B cell (primary cell): ENCODE measurements at regions of chr2 and their contacts with region 1.

Region 1: GRCh38 chr2:190781604-190782198 is 98.9 kb upstream of the GLS start:
- DNase-seq: peak; percentile 63
- ATAC-seq: peak; percentile 53
- H3K4me3 ChIP-seq: no peak overlapping the region
- H3K4me3 Mint-ChIP-seq: no peak overlapping the region
- H3K27ac ChIP-seq: no peak overlapping the region
- H3K27ac Mint-ChIP-seq: no peak overlapping the region
- H3K4me1 ChIP-seq: no peaks in the 10 kb centered on the region
- H3K4me1 Mint-ChIP-seq: no peaks in the 10 kb centered on the region
- H3K27me3 ChIP-seq: no peaks in the 10 kb centered on the region
- H3K27me3 Mint-ChIP-seq: peaks cover 12% of the 10 kb centered on the region
- CTCF ChIP-seq: peak; percentile 82

Region 2: DNA sequence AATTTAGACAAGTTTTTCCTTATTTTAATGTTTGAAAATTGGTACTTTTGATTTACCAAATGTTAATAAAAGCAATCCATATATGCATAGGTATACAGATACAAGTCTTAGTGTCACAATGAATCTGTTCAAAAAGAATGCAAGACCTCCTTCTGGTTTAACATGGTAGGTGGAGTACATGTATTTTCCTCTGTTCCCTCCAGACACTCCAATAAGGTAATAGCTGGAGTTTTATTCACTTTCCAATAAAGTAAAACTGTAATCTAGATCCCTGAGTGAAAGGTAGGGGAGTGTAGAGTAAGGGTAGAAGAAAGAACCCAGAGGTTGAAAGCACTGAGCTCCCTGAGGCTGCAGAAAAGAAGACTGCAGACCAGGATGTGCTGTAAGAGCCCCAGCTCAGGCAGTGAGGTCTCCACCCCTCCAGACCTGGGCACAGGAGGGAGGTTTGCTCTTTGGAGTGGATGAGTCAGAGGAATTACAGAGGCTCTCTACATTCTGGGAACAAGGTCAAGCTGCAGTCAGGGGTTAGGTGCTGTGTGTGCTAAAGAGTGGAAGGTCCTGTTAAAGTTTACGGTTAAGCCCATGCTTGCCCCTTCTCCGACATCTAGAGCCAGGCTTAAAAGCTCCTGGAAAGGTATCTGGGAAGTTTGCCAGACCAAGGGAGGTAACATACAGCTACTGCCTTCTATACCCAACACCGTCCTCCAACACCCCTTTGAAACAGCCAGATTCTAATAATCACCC is 259.9 kb after region 1 on chr2:
- CTCF ChIA-PET with region 1: no interaction called
- POLR2A ChIA-PET with region 1: no interaction called
- intact Hi-C with region 1: no loop called
- DNase-seq: no peak
- ATAC-seq: no peak
- H3K4me3 ChIP-seq: no peak overlapping the region
- H3K4me3 Mint-ChIP-seq: no peak overlapping the region
- H3K27ac ChIP-seq: no peak overlapping the region
- H3K27ac Mint-ChIP-seq: no peak overlapping the region
- H3K4me1 ChIP-seq: no peaks in the 10 kb centered on the region
- H3K4me1 Mint-ChIP-seq: no peaks in the 10 kb centered on the region
- H3K27me3 ChIP-seq: no peaks in the 10 kb centered on the region
- H3K27me3 Mint-ChIP-seq: peaks cover 17% of the 10 kb centered on the region
- CTCF ChIP-seq: no peak

Region 3: DNA sequence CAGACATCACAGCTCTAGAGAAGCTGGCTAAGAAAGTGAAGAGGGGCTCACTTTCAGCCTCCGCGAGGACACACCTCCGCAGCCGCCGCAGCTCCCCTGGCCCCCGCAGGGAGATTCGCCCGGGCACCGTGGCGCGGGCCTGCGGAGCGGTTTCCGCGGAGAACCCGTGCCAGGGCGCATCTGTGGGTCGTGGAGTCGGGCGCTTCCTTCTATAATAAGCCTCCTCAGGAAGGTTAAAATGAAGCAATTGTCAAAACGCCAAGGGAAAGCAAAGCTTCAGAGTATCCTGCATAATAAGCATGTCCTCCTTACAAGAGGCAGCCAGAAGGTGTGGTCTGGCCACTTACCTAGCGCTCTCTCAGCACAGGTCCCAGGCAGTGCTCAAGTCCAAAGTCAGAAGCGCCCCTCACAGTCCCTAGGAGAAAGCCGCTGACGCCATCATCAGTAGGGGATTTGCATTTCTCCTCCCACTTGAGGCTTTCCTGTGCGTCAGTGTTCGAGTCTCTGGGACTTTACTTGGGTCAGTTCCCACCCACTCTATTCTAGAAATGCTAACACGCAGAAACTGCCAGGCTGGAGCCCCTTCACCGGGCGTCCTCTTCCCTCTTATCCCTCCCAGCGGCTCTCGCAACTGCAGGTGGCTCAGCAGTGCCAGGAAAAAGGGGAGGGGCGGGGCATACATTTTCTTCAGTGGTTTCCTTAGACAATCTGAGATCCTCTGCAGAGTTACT is 369.1 kb after region 1 on chr2 and contains the start of gene STAT4:
- CTCF ChIA-PET with region 1: interaction called, 8 read pairs
- POLR2A ChIA-PET with region 1: no interaction called
- intact Hi-C with region 1: loop called (anchors 5 kb)
- DNase-seq: peak; percentile 88
- ATAC-seq: peak; percentile 91
- H3K4me3 ChIP-seq: peak within 1 kb of the TSS; percentile 52 to 97 (median 72)
- H3K4me3 Mint-ChIP-seq: peak within 1 kb of the TSS; percentile 94
- H3K27ac ChIP-seq: peak within 1 kb of the TSS; percentile 38 to 53
- H3K27ac Mint-ChIP-seq: peak within 1 kb of the TSS; percentile 85
- H3K4me1 ChIP-seq: peaks cover 3 to 16% of the 10 kb centered on the region in 2 donors
- H3K4me1 Mint-ChIP-seq: peaks cover 30% of the 10 kb centered on the region
- H3K27me3 ChIP-seq: no peaks in the 10 kb centered on the region
- H3K27me3 Mint-ChIP-seq: peaks cover 13% of the 10 kb centered on the region
- CTCF ChIP-seq: no peak
- total RNA-seq, gene STAT4: 58.9 and 62.1 TPM in 2 replicates

Region 4: DNA sequence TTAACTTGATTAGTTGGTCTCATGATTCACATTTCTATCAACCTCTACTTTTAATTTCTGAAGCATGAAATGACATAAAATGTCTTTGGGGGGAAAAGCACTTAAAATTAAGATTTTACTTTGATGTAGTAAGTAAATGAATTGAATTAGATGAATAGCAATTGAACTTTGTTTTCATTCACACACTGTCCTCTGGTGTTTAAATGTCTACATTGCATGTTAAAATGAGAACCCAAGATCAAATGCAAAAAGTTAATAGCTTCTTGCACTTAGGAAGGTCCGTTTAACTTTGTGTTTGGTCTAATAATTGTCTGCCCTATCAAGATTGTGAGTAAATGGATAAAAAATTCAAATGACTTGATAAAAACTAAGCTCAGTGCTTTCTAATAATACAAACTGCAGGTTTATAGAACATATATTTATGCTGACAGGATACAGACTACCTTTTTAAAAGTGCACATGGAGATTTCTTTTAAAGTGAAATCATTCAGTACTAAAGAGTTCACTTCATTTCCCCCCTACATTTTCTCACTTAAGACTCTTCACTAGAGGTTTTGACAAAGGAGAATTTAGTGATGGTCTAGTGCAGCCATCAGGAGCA is 740.0 kb after region 1 on chr2:
- CTCF ChIA-PET with region 1: interaction called, 4 read pairs
- POLR2A ChIA-PET with region 1: no interaction called
- intact Hi-C with region 1: loop called (anchors 1 kb)
- DNase-seq: peak; percentile 37
- ATAC-seq: peak; percentile 33
- H3K4me3 ChIP-seq: no peak overlapping the region
- H3K4me3 Mint-ChIP-seq: no peak overlapping the region
- H3K27ac ChIP-seq: no peak overlapping the region
- H3K27ac Mint-ChIP-seq: no peak overlapping the region
- H3K4me1 ChIP-seq: no peaks in the 10 kb centered on the region
- H3K4me1 Mint-ChIP-seq: no peaks in the 10 kb centered on the region
- H3K27me3 ChIP-seq: peaks cover 0 to 4% (median 0%) of the 10 kb centered on the region in 4 experiments
- H3K27me3 Mint-ChIP-seq: peaks cover 4% of the 10 kb centered on the region
- CTCF ChIP-seq: peak; percentile 92